ENCODE measurements at regions of chr14 and their contacts with region 1.

Region 1: DNA sequence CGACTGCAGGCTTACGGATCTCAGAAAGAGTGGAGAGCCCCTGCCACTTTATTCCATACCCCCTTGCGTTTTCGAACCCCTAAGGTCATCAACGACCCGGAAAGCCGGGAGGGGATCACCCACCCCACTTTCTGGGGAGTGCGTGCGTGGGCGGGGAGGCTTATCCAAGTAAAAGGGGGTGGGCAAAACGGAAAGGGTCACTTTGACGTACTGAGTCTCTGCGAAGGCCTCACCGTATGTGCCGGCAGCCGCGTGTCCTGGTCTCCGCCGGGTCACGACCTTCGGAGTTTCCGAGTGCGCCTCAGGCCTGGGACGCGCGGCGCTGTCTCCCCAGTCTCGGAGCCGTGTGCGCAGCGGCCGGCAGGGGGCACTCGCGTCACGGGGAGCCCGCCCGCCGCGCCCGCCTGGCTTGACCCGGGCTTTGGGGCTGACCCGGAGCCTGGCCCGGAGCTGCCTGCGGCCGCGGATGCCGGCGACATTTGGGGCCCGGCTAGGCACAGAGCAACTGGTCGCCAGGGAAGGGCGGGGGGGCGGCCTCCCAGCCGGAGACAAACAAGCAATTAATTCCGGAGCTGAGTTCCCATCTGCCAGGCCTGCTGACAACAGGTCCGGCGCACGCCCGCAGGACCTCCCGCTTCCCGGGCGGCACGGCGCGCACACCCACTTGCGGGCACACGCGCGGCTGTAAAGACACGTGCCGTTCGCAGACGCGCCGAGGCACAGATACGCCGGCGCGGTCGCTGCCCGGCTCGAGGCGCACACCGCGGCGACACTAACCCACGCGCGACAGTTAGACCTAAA is 890 bp upstream of the KIF26A start:
- DNase-seq: peak; percentile 69
- ATAC-seq: peak; percentile 76
- H3K4me3 Mint-ChIP-seq: peak overlapping the region; percentile 55
- H3K27ac Mint-ChIP-seq: no peak overlapping the region
- H3K4me1 Mint-ChIP-seq: peaks cover 4% of the 10 kb centered on the region
- H3K27me3 Mint-ChIP-seq: peaks cover 29% of the 10 kb centered on the region
- CTCF ChIP-seq: peak; percentile 96

Region 2: GRCh38 chr14:104283197-104284106 is 146.0 kb after region 1 on chr14:
- CTCF ChIA-PET with region 1: no interaction called
- POLR2A ChIA-PET with region 1: no interaction called
- intact Hi-C with region 1: no loop called
- DNase-seq: no peak
- ATAC-seq: no peak
- H3K4me3 Mint-ChIP-seq: no peak overlapping the region
- H3K27ac Mint-ChIP-seq: no peak overlapping the region
- H3K4me1 Mint-ChIP-seq: no peaks in the 10 kb centered on the region
- H3K27me3 Mint-ChIP-seq: peaks cover 1% of the 10 kb centered on the region
- CTCF ChIP-seq: no peak

Region 3: DNA sequence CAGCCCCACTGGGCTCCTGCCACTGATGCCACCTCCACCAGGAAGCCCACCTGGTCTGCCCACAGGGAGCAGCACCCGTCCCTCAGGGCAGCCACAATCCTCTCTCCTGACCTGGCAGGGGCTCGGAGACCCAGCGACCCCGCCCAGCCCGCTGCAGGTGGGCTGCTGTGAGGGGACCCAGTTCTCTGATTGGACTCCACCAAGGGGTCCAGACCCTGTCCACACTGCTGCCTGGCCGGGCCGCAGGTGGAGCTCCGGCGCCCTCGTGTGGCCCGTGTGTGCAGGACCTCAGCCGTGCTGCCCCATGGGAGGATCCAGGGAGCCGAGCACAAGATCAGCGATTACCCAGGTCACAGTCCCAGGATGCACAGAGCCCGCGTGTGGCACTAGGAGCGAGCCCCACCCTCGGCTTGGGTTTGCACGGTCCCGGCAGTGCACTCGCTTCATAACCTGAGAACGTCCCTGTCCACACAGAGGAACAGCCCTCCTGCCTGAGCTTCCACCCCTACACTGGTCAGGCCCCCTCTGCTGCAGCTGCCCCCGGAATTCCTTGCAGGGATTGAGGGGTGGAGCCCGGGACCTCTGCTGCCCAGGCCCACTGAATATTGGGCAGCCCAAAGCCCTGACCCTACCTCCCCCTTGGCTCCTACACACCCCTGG is 502.5 kb after region 1 on chr14:
- CTCF ChIA-PET with region 1: no interaction called
- POLR2A ChIA-PET with region 1: no interaction called
- intact Hi-C with region 1: loop called (anchors 5 kb)
- DNase-seq: peak; percentile 64
- ATAC-seq: peak; percentile 93
- H3K4me3 Mint-ChIP-seq: no peak overlapping the region
- H3K27ac Mint-ChIP-seq: no peak overlapping the region
- H3K4me1 Mint-ChIP-seq: no peaks in the 10 kb centered on the region
- H3K27me3 Mint-ChIP-seq: peaks cover 6% of the 10 kb centered on the region
- CTCF ChIP-seq: peak; percentile 92